Posterior cingulate gyrus (tissue), 11 donors: ENCODE measurements at regions of chr15 and their contacts with region 1.

Region 1: DNA sequence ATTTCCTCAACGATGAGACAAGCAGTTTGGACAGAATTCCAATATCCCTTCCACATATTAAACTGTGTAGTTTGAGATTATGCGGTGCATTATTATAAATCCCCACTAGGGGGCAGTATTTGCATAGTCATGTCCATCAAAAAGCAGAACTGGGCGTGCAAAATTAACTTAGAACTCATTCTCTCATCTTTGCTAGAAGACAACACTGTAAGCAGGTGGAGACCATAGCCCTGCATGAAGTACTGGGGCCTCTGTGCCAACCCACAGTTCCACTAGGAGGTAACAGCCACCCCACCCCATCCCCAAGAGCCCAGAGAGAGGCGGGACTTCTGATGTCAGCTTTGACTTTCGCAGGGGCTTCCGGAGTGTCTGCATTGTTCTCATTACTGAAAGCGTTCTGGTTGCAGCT is 106.6 kb upstream of the TMC3 start:
- DNase-seq: peak in 1 of 10 donors; percentile 11

Region 2: DNA sequence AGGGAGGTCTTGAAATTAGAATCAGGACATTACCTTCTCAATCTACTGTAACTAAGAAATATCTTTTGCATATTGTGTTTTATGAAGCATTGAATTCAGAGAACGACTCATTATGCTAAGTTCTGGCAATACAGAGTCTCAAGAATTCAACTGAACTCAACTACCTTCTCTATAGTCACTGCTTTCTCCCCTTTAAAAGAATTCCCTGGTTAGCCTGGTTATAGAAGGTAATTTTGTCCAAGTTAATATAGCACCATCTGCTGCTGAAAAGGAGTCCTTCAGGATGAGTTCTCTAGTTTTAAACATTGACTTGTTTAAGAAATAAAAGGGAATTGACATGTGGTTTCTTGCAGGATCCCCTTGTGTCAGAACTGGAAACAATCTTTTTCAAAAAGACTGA is 223.7 kb before region 1 on chr15:
- intact Hi-C with region 1: no loop called
- DNase-seq: no peak

Region 3: DNA sequence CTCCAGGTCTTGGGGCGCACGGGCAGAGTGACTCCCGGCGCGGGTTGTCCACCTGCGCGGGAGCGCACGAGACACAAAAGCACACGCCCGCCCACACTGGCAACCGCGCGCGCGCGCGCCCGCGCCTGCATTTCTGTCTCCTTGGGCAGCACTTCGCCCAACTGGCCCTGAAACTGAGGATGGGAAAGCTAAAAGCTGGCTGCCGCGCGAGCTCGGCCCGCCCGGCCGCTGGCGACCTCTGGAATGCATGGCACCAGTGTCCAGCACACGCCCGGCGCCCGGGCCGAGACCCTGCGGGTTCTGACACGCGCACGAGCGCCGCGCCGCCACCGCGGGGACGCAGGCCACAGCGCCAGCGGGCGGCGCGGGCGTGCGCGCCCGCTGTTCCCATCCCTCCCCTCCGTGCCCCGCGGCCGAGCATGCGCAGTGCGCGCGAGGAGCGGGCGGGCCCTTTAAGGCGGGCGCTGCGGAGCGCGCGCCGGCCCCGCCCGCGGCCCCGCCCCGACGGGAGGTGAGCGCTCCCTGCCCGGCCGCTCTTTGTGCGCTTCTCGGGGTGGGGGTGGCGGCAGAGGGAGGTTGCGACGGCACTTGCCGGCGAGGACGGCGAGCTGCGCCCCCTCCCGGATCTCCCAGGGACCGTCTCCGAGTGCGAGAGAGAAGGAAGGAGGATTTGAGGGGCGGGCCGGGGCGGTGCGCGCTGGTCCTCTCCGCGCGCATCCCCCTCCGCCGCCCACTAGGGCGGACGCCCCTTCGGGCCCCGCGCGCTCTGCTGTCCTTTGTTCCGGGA is 566.2 kb after region 1 on chr15:
- intact Hi-C with region 1: loop called (anchors 1 kb)
- DNase-seq: peak; percentile 78 to 98 (median 86)

Region 4: DNA sequence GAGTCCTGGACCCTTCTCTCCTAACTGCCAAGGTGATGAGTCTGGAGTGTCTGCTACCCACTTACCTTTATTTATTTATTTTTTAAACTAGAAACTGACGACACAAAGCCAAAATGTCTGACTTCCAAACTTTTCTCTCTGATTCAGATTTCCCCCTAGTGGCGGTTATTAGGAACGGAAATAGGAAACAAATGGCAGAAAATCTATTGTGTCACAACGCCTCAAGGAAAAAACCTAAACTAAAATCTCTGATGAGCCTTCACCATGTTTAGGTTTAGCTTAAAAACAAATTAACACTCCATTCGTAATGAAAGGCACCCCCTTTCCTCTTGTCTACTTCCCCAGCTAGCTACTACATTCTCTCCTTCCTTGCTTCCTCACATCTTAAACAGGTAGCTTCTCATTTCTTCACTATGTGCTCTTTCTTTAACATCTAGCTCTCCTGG is 659.2 kb after region 1 on chr15:
- intact Hi-C with region 1: loop called (anchors 2 kb)
- DNase-seq: no peak